WTC11 (cell line): ENCODE measurements at regions of chr3 and their contacts with region 1.

Region 1: GRCh38 chr3:13452490-13453335 is 27.4 kb upstream of the HDAC11 start:
- DNase-seq: no peak
- ATAC-seq: no peak
- H3K4me3 Mint-ChIP-seq: peak overlapping the region; percentile 78
- H3K27ac Mint-ChIP-seq: peak overlapping the region; percentile 96
- H3K4me1 Mint-ChIP-seq: peaks cover 20% of the 10 kb centered on the region
- H3K27me3 Mint-ChIP-seq: no peaks in the 10 kb centered on the region
- CTCF ChIP-seq: no peak

Region 2: DNA sequence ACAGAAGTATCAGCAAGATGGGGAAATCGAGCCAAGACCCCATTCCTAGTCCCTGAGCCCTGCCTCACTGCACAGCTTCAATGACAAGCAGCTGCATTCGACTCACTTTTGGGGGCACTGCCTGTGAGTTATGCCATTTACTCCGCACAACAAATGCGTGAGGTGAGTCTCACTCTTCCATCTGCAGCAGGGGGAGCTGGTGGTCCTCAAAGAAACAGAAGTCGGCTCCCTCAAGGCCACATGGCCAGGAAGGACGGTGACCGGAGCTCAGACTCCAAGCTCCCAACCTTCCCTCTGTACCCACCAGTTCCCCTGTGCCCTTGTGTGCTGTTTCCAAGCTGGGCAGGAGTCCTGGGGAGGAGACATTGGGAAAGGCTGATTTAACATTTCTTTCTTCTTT is 251.8 kb before region 1 on chr3:
- CTCF ChIA-PET with region 1: interaction called, 18 read pairs
- POLR2A ChIA-PET with region 1: interaction called, 3 read pairs
- DNase-seq: peak; percentile 64
- ATAC-seq: peak; percentile 80
- H3K4me3 Mint-ChIP-seq: no peak overlapping the region
- H3K27ac Mint-ChIP-seq: peak overlapping the region; percentile 36; the same call in 1 of the 2 replicates
- H3K4me1 Mint-ChIP-seq: peaks cover 18% of the 10 kb centered on the region
- H3K27me3 Mint-ChIP-seq: no peaks in the 10 kb centered on the region
- CTCF ChIP-seq: 0 out of 2 replicates have a peak, but pooled peaks have one; percentile 19

Region 3: GRCh38 chr3:13346481-13347389 is 106.0 kb before region 1 on chr3:
- CTCF ChIA-PET with region 1: interaction called, 14 read pairs
- POLR2A ChIA-PET with region 1: interaction called, 3 read pairs
- DNase-seq: peak; percentile 58
- ATAC-seq: peak; percentile 68
- H3K4me3 Mint-ChIP-seq: peak overlapping the region; percentile 59
- H3K27ac Mint-ChIP-seq: peak overlapping the region; percentile 97
- H3K4me1 Mint-ChIP-seq: peaks cover 73% of the 10 kb centered on the region
- H3K27me3 Mint-ChIP-seq: no peaks in the 10 kb centered on the region
- CTCF ChIP-seq: no peak

Region 4: DNA sequence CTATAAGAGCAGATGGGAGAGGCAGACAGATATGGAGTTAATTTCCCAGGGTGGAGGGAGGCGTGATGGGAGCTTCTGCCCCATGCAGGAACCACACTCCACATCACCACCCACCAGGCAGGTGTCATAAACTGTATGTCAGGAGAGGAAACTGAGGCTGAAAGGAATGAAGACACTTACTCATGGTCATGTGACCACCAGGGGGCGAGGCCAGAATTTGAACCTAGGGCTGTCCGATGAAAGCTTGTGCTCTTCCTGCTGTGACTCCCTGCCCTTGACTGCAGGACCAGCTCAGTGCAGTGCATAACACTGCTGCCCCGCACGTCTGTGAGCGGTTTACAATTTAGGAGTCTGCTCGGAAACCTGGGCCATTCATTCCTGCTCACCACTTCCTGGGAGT is 61.4 kb before region 1 on chr3:
- CTCF ChIA-PET with region 1: interaction called, 18 read pairs
- POLR2A ChIA-PET with region 1: no interaction called
- DNase-seq: no peak
- ATAC-seq: no peak
- H3K4me3 Mint-ChIP-seq: no peak overlapping the region
- H3K27ac Mint-ChIP-seq: no peak overlapping the region; the same call in 1 of the 2 replicates
- H3K4me1 Mint-ChIP-seq: peaks cover 3% of the 10 kb centered on the region
- H3K27me3 Mint-ChIP-seq: no peaks in the 10 kb centered on the region
- CTCF ChIP-seq: 0 out of 2 replicates have a peak, but pooled peaks have one; percentile 28

Region 5: GRCh38 chr3:13479581-13480339 is 27.0 kb after region 1 on chr3 and contains the start of gene HDAC11:
- CTCF ChIA-PET with region 1: interaction called, 18 read pairs
- POLR2A ChIA-PET with region 1: interaction called, 3 read pairs
- DNase-seq: peak; percentile 99
- ATAC-seq: peak; percentile 93
- H3K4me3 Mint-ChIP-seq: peak within 1 kb of the TSS; percentile 85
- H3K27ac Mint-ChIP-seq: peak within 1 kb of the TSS; percentile 91
- H3K4me1 Mint-ChIP-seq: peaks cover 33% of the 10 kb centered on the region
- H3K27me3 Mint-ChIP-seq: peaks cover 28% of the 10 kb centered on the region
- CTCF ChIP-seq: no peak
- total RNA-seq, gene HDAC11: 11.5 to 12.5 TPM (median 12.0 TPM) in 3 replicates